ENCODE measurements at regions of chr1 and their contacts with region 1.

Region 1: DNA sequence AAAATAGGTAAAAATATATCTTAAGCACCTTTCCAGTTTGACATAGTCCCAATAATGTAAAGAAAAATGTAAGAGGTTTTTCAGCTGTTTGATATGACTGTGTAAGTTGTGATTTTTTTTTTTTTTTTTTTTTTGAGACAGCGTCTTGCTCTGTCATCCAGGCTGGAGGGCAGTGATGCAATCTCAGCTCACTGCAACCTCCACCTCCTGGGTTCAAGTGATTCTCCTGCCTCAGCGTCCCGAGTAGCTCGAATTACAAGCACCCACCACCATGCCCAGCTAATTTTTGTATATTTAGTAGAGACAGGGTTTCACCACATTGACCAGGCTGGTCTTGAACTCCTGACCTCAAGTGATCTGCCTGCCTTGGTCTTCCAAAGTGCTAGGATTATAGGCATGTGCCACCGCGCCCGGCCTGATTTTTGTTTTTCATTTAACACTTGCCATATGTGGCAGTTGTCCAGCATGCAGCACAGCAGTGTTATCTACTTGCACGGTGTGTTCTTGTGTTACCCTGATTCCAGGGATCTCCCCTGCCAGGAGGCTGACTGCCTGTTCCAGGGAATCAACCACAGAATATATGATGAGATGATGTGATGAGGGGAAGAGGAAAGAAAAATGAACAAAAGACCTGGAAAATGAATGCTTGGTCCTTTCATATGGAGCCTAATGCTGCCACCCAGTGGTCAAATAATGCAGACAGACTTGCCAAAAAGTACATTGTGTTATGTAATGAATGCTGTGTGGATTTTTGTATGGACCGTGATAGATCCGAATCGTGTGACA is 79.0 kb downstream of the RAVER2 start:
- DNase-seq: peak in 1 of 3 donors; percentile 94
- ATAC-seq: peak; percentile 86
- H3K4me3 ChIP-seq: no peak overlapping the region
- H3K4me1 ChIP-seq: no peaks in the 10 kb centered on the region
- CTCF ChIP-seq: peak; percentile 70

Region 2: GRCh38 chr1:64686828-64687724 is 136.8 kb before region 1 on chr1:
- intact Hi-C with region 1: loop called (anchors 1 to 10 kb)
- DNase-seq: peak in 1 of 3 donors; percentile 38
- ATAC-seq: peak; percentile 87
- H3K4me3 ChIP-seq: no peak overlapping the region
- H3K4me1 ChIP-seq: peaks cover 3% of the 10 kb centered on the region
- CTCF ChIP-seq: peak; percentile 72

Region 3: GRCh38 chr1:64744492-64745180 is 79.2 kb before region 1 on chr1 and contains the start of gene RAVER2:
- intact Hi-C with region 1: loop called in 1 of 2 experiments (anchors 2 kb)
- DNase-seq: peak; percentile 83 to 90 (median 85)
- ATAC-seq: peak; percentile 89
- H3K4me3 ChIP-seq: peak within 1 kb of the TSS; percentile 86
- H3K4me1 ChIP-seq: peaks cover 10% of the 10 kb centered on the region
- CTCF ChIP-seq: peak; percentile 22
- total RNA-seq, gene RAVER2: 35.9 to 81.0 (median 46.3) TPM

Region 4: GRCh38 chr1:64923294-64923721 is 99.4 kb after region 1 on chr1:
- intact Hi-C with region 1: no loop called
- DNase-seq: no peak
- ATAC-seq: no peak
- H3K4me3 ChIP-seq: no peak overlapping the region
- H3K4me1 ChIP-seq: peaks cover 46% of the 10 kb centered on the region
- CTCF ChIP-seq: no peak

Region 5: DNA sequence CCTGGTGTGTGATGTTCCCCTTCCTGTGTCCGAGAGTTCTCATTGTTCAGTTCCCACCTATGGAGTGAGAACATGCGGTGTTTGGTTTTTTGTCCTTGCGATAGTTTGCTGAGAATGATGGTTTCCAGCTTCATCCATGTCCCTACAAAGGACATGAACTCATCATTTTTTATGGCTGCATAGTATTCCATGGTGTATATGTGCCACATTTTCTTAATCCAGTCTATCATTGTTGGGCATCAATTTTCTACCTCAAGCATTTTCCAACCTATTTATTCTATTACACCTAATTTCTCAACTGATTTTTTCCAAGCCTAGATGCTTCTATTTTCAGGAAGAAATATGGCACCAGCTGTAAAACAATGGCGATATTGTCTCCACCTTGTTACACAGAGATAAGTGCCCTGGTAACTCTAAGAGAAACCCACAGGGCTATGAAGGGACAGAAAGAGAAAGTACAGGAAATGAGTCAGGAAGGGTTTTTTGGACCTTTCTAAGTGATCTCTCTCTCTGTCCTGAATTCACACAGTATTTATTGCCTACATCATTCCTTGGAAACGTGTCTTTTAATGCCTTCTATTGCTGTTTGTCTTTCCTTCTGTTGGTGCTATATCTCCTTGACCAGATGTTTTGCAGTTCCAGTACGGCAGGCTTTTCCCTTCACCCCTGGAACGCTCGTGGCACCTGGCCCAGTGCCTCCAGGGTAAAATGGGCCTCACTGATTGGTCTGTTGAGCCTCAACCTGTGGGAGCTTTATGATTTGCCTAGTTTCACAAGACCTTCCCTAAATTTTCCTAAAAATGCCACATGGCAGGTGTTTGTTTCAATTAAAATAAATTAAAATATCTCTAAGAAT is 157.1 kb after region 1 on chr1:
- intact Hi-C with region 1: no loop called
- DNase-seq: peak in 1 of 3 donors; percentile 42
- ATAC-seq: peak; percentile 81
- H3K4me3 ChIP-seq: no peak overlapping the region
- H3K4me1 ChIP-seq: peaks cover 5% of the 10 kb centered on the region
- CTCF ChIP-seq: no peak